Activated CD4-positive, alpha-beta T cell treated with anti-CD3 and anti-CD28 coated beads for 36 hours (primary cell): ENCODE measurements at regions of chr9 and their contacts with region 1.

Region 1: GRCh38 chr9:91305596-91306295 is 56.0 kb downstream of the AUH start:
- DNase-seq: no peak
- ATAC-seq: peak; percentile 30
- H3K4me3 Mint-ChIP-seq: no peak overlapping the region
- H3K27ac Mint-ChIP-seq: no peak overlapping the region
- H3K4me1 Mint-ChIP-seq: peaks cover 26% of the 10 kb centered on the region
- H3K27me3 Mint-ChIP-seq: no peaks in the 10 kb centered on the region

Region 2: DNA sequence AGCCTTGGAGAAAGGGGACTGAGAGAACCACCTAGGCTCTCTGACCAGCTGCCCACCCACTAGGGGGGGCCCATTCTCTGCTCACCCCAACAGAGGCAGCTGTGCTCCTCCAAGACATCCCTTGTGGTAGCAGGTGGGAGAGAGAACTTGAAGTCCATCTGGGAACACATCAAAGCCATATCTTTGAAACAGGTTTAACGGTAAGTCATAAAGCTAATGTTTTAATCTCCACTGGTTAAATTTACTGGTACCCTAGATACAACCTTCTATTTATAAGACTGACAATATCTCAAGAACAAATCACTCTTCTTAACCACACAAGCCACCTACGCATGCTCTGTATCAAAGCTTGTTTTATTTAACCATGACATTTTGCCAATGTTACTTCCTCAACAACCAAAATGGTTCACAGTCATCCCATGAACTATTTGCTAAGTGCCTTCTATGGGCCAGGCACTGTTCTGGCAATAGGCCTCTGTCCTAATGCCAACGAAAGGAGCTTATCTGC is 35.5 kb after region 1 on chr9:
- CTCF ChIA-PET with region 1: interaction called, 3 read pairs
- POLR2A ChIA-PET with region 1: no interaction called
- intact Hi-C with region 1: loop called in 1 of 2 experiments (anchors 5 kb)
- DNase-seq: peak; percentile 22
- ATAC-seq: peak; percentile 71
- H3K4me3 Mint-ChIP-seq: no peak overlapping the region
- H3K27ac Mint-ChIP-seq: peak overlapping the region; percentile 55
- H3K4me1 Mint-ChIP-seq: peaks cover 34% of the 10 kb centered on the region
- H3K27me3 Mint-ChIP-seq: no peaks in the 10 kb centered on the region

Region 3: GRCh38 chr9:91681461-91682305 is 375.9 kb after region 1 on chr9:
- CTCF ChIA-PET with region 1: no interaction called
- POLR2A ChIA-PET with region 1: no interaction called
- intact Hi-C with region 1: no loop called
- DNase-seq: peak; percentile 88
- ATAC-seq: peak; percentile 96
- H3K4me3 Mint-ChIP-seq: no peak overlapping the region
- H3K27ac Mint-ChIP-seq: no peak overlapping the region
- H3K4me1 Mint-ChIP-seq: no peaks in the 10 kb centered on the region
- H3K27me3 Mint-ChIP-seq: peaks cover 14% of the 10 kb centered on the region